A549 (cell line): ENCODE measurements at regions of chr7 and their contacts with region 1.

Region 1: GRCh38 chr7:55255496-55256435 is 109.4 kb upstream of the LANCL2 start:
- DNase-seq: peak; percentile 71 to 85
- ATAC-seq: peak; percentile 89 to 91
- H3K4me3 ChIP-seq: peak overlapping the region; percentile 69
- H3K27ac ChIP-seq: peak overlapping the region; percentile 91 to 95
- H3K4me1 ChIP-seq: peaks cover 4% of the 10 kb centered on the region; the same call in 1 of the 3 replicates
- CTCF ChIP-seq: peak; percentile 82
- EP300 ChIP-seq: no peak
- POLR2A ChIP-seq: no peak
- RAD21 ChIP-seq: peak; percentile 91 to 94

Region 2: GRCh38 chr7:54773472-54774399 is 482.0 kb before region 1 on chr7:
- CTCF ChIA-PET with region 1: interaction called, 742 read pairs
- POLR2A ChIA-PET with region 1: interaction called, 10 read pairs
- DNase-seq: peak; percentile 69 to 93
- ATAC-seq: peak; percentile 96 to 98
- H3K4me3 ChIP-seq: peak overlapping the region; percentile 48
- H3K27ac ChIP-seq: peak overlapping the region; percentile 74 to 81
- H3K4me1 ChIP-seq: peaks cover 14% of the 10 kb centered on the region
- CTCF ChIP-seq: peak; percentile 93
- EP300 ChIP-seq: no peak
- POLR2A ChIP-seq: no peak
- RAD21 ChIP-seq: peak; percentile 94 to 99

Region 3: DNA sequence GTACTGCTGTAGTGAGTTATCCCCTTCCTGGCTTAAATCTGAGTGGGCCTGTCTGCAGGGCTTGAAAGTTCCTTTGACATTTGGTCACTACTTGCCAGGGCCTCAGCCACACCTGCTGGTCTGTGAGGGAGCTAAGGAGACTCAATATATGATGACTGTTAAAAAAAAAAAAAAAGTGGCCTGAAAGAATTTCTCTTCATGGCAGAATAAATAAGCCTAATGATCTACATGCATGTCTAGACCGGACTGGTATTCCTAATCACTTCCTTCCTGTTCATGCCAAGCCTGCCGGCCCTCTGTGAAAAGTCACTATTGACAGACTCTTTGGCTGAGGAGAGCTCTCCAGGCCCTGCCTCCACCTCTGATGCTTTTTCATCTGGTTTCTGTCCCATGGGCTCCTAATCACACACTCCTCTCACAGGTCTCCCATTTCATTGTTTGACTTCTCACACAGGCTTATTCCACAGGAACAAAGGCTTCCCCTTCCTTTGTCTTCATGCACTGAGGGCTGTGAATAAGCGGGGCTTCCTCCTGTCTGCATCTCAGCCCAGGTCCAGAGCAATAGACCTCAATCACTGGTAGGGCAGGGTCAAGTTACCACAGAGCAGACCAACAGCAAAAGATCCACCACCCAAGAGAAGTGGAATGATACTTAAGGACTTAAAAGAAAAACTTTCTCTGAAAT is 397.6 kb before region 1 on chr7:
- CTCF ChIA-PET with region 1: interaction called, 15 read pairs
- POLR2A ChIA-PET with region 1: no interaction called
- DNase-seq: no peak
- ATAC-seq: no peak
- H3K4me3 ChIP-seq: no peak overlapping the region
- H3K27ac ChIP-seq: no peak overlapping the region
- H3K4me1 ChIP-seq: peaks cover 8% of the 10 kb centered on the region; the same call in 2 of the 3 replicates
- CTCF ChIP-seq: no peak
- EP300 ChIP-seq: no peak
- POLR2A ChIP-seq: no peak
- RAD21 ChIP-seq: no peak

Region 4: DNA sequence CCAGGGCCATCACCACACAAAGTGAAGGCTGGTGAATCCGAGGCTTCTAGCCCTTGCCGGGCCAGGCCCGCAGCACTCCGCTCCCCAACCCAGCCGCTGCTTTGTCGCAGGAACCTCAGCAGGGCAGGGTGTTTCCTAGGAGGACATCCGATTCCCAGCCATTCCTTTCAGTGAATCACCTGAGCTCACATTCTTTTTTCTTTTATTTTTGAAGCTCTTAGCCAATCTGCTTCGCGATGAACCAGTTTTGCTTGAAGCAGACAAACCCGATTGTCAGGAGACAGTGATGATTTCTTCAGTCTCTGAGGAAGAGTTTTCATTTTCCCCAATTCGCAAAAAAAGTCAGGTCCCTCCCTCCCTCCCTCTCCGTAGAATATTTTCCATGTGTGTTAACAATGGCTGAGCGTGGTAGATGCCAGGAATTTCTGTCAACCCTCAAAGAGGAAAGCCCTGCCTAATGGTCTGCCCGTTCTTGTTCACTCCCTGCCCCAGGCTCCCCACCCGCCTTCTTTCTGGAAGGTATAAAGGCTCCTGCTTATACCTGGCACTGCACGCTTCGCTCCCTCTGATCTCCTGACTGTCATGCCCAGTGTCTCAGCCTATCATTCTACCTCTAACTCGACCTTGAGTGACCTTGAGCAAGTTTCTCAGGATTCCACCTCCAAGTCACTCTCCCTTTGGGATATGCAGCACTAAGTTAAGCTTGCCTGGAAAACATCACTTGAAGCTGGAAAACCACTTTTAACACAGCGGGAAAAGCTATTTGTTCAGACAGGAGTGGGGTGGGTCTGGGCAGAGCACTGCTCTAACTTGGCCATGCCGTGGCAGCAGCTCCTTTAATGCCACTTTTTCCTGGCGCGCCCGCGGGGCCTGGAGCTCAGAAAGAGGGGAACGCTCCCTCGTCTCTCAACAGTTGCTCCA is 201.9 kb before region 1 on chr7:
- CTCF ChIA-PET with region 1: interaction called, 26 read pairs
- POLR2A ChIA-PET with region 1: interaction called, 4 read pairs
- DNase-seq: no peak
- ATAC-seq: no peak
- H3K4me3 ChIP-seq: no peak overlapping the region
- H3K27ac ChIP-seq: peak overlapping the region; percentile 85 to 92
- H3K4me1 ChIP-seq: peaks cover 93% of the 10 kb centered on the region
- CTCF ChIP-seq: no peak
- EP300 ChIP-seq: no peak
- POLR2A ChIP-seq: no peak
- RAD21 ChIP-seq: no peak

Region 5: DNA sequence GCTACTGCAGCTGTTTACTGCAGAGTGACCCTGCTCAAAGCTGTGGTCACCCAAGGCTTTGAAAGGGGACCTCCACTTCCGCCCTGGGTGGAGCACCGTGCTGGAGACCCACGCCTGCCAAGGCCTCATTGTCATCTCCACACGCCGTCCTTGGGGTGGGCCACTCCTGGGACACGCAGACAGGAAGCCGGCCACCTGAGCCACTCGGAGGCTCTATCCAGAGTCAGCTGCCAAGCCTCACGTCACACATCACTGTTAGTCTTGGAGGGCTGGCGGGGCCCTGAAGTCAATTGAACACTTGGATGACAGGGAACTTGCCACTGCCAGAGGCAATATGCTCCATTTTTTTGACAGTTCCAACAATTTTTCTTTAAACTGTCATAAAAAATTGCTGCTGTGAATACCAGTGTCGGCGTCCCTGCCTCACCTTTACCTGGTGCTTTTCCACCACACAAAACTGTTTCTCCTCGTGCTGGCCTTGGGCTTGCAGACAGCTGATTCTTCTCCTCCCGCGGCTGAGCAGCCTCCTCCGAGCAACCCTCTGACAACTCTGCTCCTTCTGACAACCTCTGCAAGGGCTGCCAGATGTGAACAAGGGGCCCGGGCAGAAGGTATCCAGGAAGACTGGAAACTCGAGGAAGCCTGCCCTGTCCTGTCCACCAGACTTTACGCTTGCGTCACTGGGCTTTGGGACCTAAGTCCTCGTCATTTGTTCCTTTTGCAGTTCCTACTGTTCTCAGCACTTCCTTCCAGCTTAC is 155.0 kb before region 1 on chr7:
- CTCF ChIA-PET with region 1: no interaction called
- POLR2A ChIA-PET with region 1: no interaction called
- DNase-seq: no peak
- ATAC-seq: no peak; a peak in 3 of 6 replicates
- H3K4me3 ChIP-seq: no peak overlapping the region
- H3K27ac ChIP-seq: no peak overlapping the region; a peak in 1 of 6 replicates
- H3K4me1 ChIP-seq: peaks cover 42% of the 10 kb centered on the region; the same call in 2 of the 3 replicates
- CTCF ChIP-seq: no peak
- EP300 ChIP-seq: no peak
- POLR2A ChIP-seq: no peak
- RAD21 ChIP-seq: no peak

Region 6: DNA sequence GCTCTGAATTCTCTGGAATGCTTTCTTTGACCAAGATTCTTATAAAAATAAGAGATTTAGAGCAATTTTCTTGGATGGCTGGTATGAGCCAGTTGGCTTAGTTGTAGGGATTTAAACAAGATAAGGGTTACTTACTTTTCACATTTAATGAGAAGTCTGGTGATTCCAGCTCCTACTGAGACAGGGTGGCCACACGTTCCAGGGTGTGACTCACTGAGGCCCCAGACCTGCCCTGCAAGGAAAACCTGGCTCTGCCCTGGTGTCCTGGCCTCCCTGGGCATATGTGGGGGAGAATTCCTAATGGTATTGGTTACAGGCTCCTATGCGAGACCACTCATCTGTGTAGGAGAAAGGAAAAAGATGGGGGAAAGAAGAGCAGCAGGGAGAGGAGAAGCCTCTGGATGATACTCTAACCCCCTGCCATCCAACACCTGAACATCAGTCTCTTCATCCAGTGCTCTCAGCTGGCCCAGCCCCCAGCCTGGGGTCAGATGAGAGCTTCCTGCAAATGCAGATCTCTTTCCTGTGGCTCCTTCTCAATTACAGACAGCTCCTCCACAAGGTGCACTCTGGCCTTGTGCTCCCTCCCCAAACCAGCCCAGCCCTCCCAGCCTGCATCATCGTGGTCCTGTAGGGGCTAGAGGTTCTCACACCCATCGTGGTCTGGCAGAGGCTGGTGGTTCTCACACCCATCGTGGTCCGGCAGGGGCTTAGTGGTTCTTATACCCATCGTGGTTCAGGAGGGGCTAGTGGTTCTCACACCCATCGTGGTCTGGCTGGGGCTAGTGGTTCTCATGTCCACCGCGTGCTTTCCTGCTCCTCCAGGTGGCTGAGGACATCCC is 97.0 kb before region 1 on chr7:
- CTCF ChIA-PET with region 1: interaction called, 10 read pairs
- POLR2A ChIA-PET with region 1: no interaction called
- DNase-seq: no peak
- ATAC-seq: no peak
- H3K4me3 ChIP-seq: no peak overlapping the region
- H3K27ac ChIP-seq: no peak overlapping the region
- H3K4me1 ChIP-seq: no peaks in the 10 kb centered on the region
- CTCF ChIP-seq: no peak
- EP300 ChIP-seq: no peak
- POLR2A ChIP-seq: no peak
- RAD21 ChIP-seq: no peak

Region 7: DNA sequence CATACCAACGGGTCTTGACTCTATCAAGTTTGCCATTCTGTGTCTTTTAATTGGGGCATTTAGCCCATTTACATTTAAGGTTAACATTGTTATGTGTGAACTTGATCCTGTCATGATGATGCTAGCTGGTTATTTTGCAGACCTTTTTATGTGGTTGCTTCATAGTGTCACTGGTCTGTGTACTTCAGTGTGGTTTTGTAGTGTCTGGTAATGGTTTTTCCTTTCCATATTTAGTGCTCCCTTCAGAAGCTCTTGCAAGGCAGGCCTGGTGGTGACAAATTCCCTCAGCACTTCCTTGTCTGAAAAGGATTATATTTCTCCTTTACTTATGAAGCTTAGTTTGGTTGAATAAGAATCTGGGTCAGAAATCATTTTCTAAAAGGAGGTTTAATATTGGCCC is 25.8 kb before region 1 on chr7:
- CTCF ChIA-PET with region 1: interaction called, 16 read pairs
- POLR2A ChIA-PET with region 1: no interaction called
- DNase-seq: no peak
- ATAC-seq: no peak
- H3K4me3 ChIP-seq: no peak overlapping the region
- H3K27ac ChIP-seq: no peak overlapping the region
- H3K4me1 ChIP-seq: no peaks in the 10 kb centered on the region
- CTCF ChIP-seq: no peak
- EP300 ChIP-seq: no peak
- POLR2A ChIP-seq: no peak
- RAD21 ChIP-seq: no peak